ENCODE measurements at regions of chr20 and their contacts with region 1.

Region 1: DNA sequence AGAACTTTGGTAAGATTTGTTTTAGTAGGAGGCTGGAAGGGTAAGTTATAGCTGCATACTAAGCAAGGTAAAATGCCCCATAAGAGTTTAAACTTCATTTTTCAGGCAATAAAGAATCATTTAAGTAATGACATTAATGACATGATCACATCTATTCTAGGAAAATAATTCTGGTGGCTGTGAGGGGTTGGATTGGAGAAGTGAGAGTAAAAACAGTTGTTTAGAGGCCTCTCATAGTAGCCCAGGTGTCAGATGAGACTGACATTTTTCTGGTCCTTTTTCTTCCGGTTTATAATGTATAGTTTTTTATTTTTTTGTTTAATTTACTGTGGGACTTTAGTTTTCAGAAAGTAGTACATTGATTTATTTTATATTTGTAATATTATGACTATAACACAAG is 40.8 kb downstream of the ITCH start:
- DNase-seq: no peak
- ATAC-seq: no peak
- H3K4me3 ChIP-seq: no peak overlapping the region
- H3K27ac ChIP-seq: no peak overlapping the region
- H3K4me1 ChIP-seq: peaks cover 11% of the 10 kb centered on the region
- H3K27me3 ChIP-seq: no peaks in the 10 kb centered on the region
- CTCF ChIP-seq: no peak
- POLR2A ChIP-seq: no peak
- RAD21 ChIP-seq: no peak

Region 2: GRCh38 chr20:34427331-34427730 is 23.4 kb after region 1 on chr20:
- CTCF ChIA-PET with region 1: no interaction called
- POLR2A ChIA-PET with region 1: no interaction called
- dilution Hi-C with region 1: no loop called
- in situ Hi-C with region 1: no loop called
- intact Hi-C with region 1: no loop called
- DNase-seq: no peak
- ATAC-seq: no peak
- H3K4me3 ChIP-seq: no peak overlapping the region
- H3K27ac ChIP-seq: no peak overlapping the region
- H3K4me1 ChIP-seq: peaks cover 2% of the 10 kb centered on the region; the same call in 1 of the 2 replicates
- H3K27me3 ChIP-seq: no peaks in the 10 kb centered on the region
- CTCF ChIP-seq: no peak
- POLR2A ChIP-seq: no peak
- RAD21 ChIP-seq: no peak

Region 3: GRCh38 chr20:34452281-34452982 is 48.5 kb after region 1 on chr20:
- CTCF ChIA-PET with region 1: no interaction called
- POLR2A ChIA-PET with region 1: no interaction called
- dilution Hi-C with region 1: no loop called
- in situ Hi-C with region 1: no loop called
- intact Hi-C with region 1: loop called (anchors 10 kb)
- DNase-seq: peak; percentile 57
- ATAC-seq: peak; percentile 84
- H3K4me3 ChIP-seq: no peak overlapping the region
- H3K27ac ChIP-seq: no peak overlapping the region; the same call in 1 of the 2 replicates
- H3K4me1 ChIP-seq: peaks cover 6% of the 10 kb centered on the region
- H3K27me3 ChIP-seq: no peaks in the 10 kb centered on the region
- CTCF ChIP-seq: no peak
- POLR2A ChIP-seq: no peak
- RAD21 ChIP-seq: no peak